Upper lobe of right lung (tissue), 1 donor: ENCODE measurements at regions of chr12 and their contacts with region 1.

Region 1: DNA sequence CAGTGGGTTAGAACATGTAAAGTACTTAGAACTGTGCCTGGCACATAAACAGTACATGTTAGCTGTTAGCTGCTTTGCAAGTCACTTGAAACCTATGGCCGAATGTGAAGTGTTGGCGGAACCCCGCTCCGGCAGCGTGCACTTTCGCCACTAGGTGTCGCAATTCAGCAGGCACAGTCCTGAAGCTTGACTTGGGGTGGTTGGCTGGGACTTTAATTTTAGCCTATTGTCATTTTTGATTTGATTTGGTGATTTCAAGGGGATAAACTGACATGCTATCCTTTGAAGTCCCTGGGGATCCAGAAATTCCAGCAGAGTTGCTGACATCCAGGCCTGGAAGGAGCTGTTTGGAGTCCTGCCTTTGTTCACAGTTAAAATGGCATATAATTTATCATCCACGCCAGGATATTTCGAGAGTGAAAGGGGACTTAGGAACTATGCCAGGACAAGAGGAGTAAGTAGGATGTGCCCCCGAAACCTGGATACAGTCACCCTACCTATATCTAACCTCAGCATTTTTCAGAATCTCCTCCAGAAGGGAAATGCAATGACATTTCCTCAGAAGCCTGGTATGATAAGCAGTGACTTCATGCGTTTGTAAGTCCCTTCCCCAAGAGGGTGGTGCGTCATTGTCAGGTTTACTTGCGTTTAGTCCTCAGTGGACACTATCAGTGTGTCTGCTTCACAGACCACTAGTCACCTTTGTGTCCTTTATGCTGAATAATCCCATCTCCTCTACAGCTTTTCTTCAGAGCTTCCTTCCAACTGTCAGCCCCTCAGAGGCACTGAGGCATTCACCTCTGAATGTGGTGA is 3.5 kb upstream of the TSPAN9 start:
- DNase-seq: peak; percentile 89
- ATAC-seq: peak; percentile 61
- H3K4me3 ChIP-seq: no peak overlapping the region
- H3K27ac ChIP-seq: no peak overlapping the region
- H3K4me1 ChIP-seq: peaks cover 6% of the 10 kb centered on the region
- H3K27me3 ChIP-seq: no peaks in the 10 kb centered on the region
- CTCF ChIP-seq: peak; percentile 100

Region 2: GRCh38 chr12:3122835-3123678 is 49.4 kb after region 1 on chr12:
- intact Hi-C with region 1: loop called (anchors 10 kb)
- DNase-seq: no peak
- ATAC-seq: peak; percentile 61
- H3K4me3 ChIP-seq: no peak overlapping the region
- H3K27ac ChIP-seq: peak overlapping the region; percentile 55
- H3K4me1 ChIP-seq: peaks cover 42% of the 10 kb centered on the region
- H3K27me3 ChIP-seq: no peaks in the 10 kb centered on the region
- CTCF ChIP-seq: peak; percentile 28